SK-N-SH (cell line): ENCODE measurements at regions of chr16 and their contacts with region 1.

Region 1: DNA sequence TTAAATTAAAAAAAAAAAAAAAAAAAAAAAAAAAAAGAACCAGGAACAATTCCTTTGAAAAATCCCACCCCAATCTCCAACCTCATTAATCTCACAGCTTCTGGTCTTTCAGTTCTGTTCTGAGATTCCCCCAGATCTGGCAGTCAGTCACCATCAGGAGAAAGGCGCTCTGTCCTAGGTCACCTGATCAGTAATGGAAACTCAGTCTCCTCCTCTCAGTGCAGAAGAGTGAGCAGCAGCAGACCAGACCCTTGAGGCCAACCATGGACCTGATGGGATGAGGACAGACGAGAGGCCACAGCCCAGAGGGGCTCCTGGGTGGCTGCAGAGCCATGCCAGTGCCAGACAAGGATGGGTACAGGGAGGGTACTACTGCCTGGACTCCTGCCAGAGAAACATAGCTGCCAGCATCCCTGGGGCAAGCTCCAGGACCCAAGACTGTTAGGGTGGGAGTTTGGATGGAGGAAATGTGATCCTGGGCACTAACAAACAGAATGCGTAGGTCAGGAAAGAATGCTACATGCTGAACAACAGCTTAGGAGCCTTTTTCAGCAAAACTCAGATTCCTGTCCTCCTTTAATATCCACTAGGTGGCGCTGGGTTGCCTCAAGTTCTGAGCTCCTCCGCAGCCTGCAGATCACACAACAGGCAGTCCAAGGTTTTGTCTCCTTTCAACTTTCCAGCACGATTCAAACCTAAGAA is 28.7 kb downstream of the MPG start:
- DNase-seq: peak; percentile 79
- H3K4me3 ChIP-seq: no peak overlapping the region; a peak in 1 of 4 replicates
- H3K27ac ChIP-seq: no peak overlapping the region
- H3K4me1 ChIP-seq: no peaks in the 10 kb centered on the region; a peak in 1 of 4 replicates
- H3K27me3 ChIP-seq: no peaks in the 10 kb centered on the region
- CTCF ChIP-seq: peak; percentile 84
- EP300 ChIP-seq: no peak
- RAD21 ChIP-seq: peak; percentile 83

Region 2: GRCh38 chr16:129075-129474 is 22.3 kb after region 1 on chr16:
- CTCF ChIA-PET with region 1: interaction called, 31 read pairs
- POLR2A ChIA-PET with region 1: no interaction called
- DNase-seq: no peak
- H3K4me3 ChIP-seq: no peak overlapping the region
- H3K27ac ChIP-seq: no peak overlapping the region
- H3K4me1 ChIP-seq: no peaks in the 10 kb centered on the region
- H3K27me3 ChIP-seq: no peaks in the 10 kb centered on the region
- CTCF ChIP-seq: no peak
- EP300 ChIP-seq: no peak
- RAD21 ChIP-seq: no peak

Region 3: DNA sequence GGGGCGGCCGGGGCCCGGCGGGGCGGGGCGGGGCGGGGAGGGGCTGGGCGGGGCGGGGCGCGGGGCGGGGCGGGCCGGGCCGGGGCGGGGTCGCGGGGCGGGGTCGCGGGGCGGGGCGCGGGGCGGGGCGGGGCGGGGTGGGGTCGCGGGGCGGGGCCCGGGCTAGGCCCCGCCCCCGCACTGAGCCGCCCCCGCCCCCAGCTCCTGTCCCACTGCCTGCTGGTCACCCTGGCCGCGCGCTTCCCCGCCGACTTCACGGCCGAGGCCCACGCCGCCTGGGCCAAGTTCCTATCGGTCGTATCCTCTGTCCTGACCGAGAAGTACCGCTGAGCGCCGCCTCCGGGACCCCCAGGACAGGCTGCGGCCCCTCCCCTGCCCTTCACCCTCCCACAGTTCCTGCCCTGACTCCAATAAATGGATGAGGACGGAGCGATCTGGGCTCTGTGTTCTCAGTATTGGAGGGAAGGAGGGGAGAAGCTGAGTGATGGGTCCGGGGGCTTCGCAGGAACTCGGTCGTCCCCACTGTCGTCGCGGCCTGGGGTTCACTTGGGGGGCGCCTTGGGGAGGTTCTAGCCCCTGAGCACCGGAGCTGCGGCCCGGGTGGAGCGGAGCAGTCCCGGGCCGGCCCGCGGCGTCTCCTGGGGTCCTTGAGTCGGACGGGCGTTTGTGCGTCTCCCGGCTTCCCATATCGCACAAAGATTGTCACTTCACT is 58.2 kb after region 1 on chr16:
- CTCF ChIA-PET with region 1: interaction called, 16 read pairs
- POLR2A ChIA-PET with region 1: no interaction called
- DNase-seq: peak; percentile 94
- H3K4me3 ChIP-seq: peak overlapping the region in 1 of 2 experiments; percentile 32; a peak in 2 of 4 replicates
- H3K27ac ChIP-seq: no peak overlapping the region
- H3K4me1 ChIP-seq: peaks cover 0 to 13% of the 10 kb centered on the region in 2 experiments; a peak in 1 of 4 replicates
- H3K27me3 ChIP-seq: peaks cover 28% of the 10 kb centered on the region
- CTCF ChIP-seq: no peak
- EP300 ChIP-seq: no peak
- RAD21 ChIP-seq: no peak

Region 4: DNA sequence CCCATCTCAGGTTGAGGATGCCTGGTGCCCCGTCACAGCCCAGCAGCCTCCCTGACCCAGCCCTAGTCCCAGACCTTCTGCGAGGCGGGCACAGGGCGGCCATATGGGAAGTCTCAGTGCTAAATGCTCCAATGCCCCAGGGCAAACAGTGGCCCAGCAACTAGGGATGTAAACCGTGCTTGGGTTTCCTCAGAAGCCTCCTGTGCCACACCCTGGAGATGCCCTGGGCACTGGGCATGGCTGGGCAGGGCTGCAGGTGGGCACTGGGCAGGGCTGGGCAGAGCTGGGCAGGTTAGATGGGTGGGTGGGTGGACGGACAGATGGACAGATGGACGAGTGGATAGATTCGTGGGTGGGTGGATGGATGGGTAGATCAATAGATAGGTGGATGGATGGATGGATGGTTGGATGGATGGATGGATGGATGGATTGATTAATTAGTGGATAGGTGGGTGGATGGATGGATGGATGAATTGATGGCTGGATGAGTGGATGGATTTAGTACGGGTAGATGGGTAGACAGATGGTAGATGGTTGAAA is 1165.9 kb after region 1 on chr16:
- CTCF ChIA-PET with region 1: no interaction called
- POLR2A ChIA-PET with region 1: no interaction called
- DNase-seq: peak; percentile 84
- H3K4me3 ChIP-seq: no peak overlapping the region
- H3K27ac ChIP-seq: no peak overlapping the region
- H3K4me1 ChIP-seq: peaks cover 0 to 19% of the 10 kb centered on the region in 2 experiments; a peak in 1 of 4 replicates
- H3K27me3 ChIP-seq: peaks cover 77% of the 10 kb centered on the region
- CTCF ChIP-seq: no peak
- EP300 ChIP-seq: peak in 1 of 2 experiments; percentile 32; a peak in 1 of 4 replicates
- RAD21 ChIP-seq: no peak